Activated B cell treated with CpG ODN at 0.5 μM for 24 hours (primary cell): ENCODE measurements at regions of chr12 and their contacts with region 1.

Region 1: GRCh38 chr12:89019408-89020120 is 332.7 kb downstream of the DUSP6 start:
- DNase-seq: peak; percentile 25
- ATAC-seq: peak; percentile 99
- H3K4me3 Mint-ChIP-seq: no peak overlapping the region
- H3K27ac Mint-ChIP-seq: no peak overlapping the region
- H3K4me1 Mint-ChIP-seq: peaks cover 4% of the 10 kb centered on the region
- H3K27me3 Mint-ChIP-seq: peaks cover 4% of the 10 kb centered on the region
- CTCF ChIP-seq: peak; percentile 41

Region 2: DNA sequence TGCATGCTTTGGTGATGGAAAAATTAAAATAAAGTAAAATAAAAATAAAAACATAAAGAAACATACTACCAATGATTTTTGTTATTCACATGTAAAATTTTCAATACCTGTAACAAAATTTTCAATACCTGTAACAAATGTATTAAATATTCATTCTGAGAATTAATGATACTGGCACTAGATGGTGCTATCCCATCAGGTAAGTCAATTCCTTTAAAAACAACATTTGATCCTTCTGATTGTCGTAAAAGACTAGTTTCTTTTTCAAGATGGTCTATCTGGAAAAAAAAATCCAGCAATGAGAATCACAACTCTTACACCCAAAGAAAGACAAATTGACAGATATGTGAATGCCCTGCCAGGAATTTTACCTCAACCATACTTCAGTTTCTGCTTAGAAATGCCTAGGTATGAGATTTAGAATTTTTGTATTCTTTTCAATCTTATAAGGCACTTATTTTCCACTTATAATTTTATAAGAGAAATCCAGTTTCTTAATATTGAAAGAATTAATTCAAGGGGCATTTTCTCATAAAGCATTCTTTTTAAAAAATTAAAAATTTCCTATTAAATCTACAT is 908.4 kb before region 1 on chr12:
- CTCF ChIA-PET with region 1: no interaction called
- POLR2A ChIA-PET with region 1: no interaction called
- intact Hi-C with region 1: loop called (anchors 5 kb)
- DNase-seq: no peak
- ATAC-seq: no peak
- H3K4me3 Mint-ChIP-seq: no peak overlapping the region
- H3K27ac Mint-ChIP-seq: no peak overlapping the region
- H3K4me1 Mint-ChIP-seq: no peaks in the 10 kb centered on the region
- H3K27me3 Mint-ChIP-seq: no peaks in the 10 kb centered on the region
- CTCF ChIP-seq: no peak

Region 3: DNA sequence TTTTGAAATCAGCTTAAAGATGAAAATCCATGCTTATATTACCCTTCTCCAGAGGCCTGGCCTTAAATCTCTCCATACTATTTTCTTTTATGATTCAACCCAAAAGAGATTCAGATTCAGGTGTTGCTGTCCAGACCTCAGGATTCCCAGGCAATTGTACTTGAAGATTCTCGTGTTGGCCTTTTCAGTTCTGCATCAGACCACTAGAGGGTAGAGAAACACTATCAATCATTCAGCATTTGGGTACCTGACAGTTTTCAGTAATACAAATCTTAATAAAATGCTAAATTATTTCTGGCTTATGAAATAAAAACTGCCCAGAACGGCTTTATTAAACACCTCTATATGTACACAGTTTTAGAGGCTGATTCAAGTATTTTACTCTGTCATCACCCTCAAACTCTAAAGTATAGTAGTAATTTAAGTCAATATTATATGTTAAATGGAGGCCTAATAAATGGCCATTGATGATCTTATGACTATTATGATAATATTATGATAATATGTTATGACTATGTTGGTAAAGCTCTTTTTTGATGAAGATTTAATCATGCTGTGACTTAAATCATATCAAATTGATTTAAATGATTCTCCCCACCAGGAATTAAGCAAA is 31.6 kb after region 1 on chr12:
- CTCF ChIA-PET with region 1: interaction called, 3 read pairs
- POLR2A ChIA-PET with region 1: no interaction called
- intact Hi-C with region 1: loop called (anchors 1 kb)
- DNase-seq: no peak
- ATAC-seq: peak; percentile 67
- H3K4me3 Mint-ChIP-seq: no peak overlapping the region
- H3K27ac Mint-ChIP-seq: no peak overlapping the region
- H3K4me1 Mint-ChIP-seq: no peaks in the 10 kb centered on the region
- H3K27me3 Mint-ChIP-seq: no peaks in the 10 kb centered on the region
- CTCF ChIP-seq: no peak

Region 4: DNA sequence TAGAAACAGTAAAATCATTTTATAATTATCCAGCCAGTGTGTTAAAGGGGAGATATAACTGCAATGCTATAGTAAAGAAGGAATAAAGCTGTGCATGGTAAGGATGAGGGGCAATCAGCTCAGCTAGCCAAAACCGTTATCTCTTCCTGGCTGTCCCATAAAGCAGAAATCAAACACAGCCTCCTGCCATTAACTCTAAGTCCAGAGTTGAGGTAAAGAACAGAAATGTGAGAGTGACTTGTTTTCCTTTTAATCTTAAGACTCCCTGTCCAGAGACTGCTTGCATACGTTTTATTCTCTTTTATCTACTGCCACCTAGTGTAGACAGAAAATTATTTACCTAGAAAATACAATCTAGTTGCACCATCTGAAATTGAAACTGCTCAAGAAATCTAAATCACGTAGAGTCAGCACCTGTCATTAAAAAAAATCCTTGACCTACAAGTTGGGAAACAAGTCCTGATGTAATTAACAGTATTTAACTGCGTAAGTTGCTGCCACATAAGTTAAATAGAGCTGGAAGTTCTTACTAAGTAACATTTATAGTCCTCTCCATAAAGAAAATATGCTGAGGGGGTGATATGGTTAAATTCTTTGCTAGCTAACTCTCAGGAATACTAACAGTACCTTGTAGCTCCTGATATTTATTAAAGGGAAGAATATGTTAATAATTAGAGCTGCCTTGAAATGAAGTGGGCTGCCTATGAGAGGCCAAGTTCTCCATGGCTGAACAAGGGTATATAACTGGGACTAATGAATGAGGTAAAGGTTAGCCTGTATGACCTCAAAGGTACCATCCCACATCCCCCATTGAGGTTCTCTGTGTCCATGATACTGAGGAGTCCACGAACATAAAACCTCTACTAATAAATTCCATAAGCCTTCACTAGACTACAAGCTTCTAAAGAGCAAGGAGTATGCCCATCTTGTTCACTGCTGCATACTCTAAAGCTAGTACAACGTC is 442.4 kb after region 1 on chr12:
- CTCF ChIA-PET with region 1: interaction called, 80 read pairs
- POLR2A ChIA-PET with region 1: no interaction called
- intact Hi-C with region 1: loop called (anchors 1 kb)
- DNase-seq: no peak
- ATAC-seq: peak; percentile 77
- H3K4me3 Mint-ChIP-seq: peak overlapping the region; percentile 41
- H3K27ac Mint-ChIP-seq: no peak overlapping the region
- H3K4me1 Mint-ChIP-seq: peaks cover 16% of the 10 kb centered on the region
- H3K27me3 Mint-ChIP-seq: no peaks in the 10 kb centered on the region
- CTCF ChIP-seq: peak; percentile 28

Region 5: DNA sequence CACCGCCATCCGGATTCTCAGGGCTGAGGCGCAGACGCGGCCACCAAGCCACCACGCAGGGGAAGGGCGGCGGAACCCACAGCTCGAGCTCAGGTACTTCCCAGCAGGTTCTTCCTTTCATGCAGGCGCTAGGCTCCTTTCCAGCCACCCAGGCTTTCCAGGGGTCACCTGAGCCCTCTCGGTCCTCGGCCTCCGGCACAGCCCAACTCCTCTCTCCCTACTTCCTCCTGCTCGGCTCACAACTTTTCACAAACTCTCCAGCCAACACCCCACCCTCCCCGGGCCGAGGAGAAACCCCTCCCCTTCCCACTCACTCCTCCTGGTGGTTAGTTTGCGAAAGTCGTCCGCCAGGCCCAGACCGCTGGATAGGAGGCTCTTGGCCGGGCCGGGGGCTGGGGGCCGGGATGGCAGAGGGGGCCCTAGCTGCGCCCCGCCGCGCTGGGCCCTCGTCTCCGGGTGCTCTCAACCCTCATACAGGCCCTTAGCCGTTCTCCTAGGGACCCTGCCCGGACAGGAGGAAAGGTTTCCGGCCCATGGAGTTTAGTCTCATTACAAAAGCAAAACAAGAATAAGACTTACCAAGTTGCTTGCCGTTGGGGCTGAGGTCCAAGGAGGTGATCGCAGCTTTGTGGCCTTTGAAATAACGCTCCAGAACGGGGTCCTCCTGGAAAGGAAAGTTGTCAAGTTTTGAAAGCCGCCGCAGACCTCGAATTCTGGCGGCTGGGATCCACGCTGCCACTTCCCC is 505.1 kb after region 1 on chr12 and contains the start of gene GALNT4:
- CTCF ChIA-PET with region 1: interaction called, 20 read pairs
- POLR2A ChIA-PET with region 1: interaction called, 3 read pairs
- intact Hi-C with region 1: loop called (anchors 1 kb)
- DNase-seq: peak; percentile 75
- ATAC-seq: peak; percentile 78
- H3K4me3 Mint-ChIP-seq: peak within 1 kb of the TSS; percentile 99
- H3K27ac Mint-ChIP-seq: peak within 1 kb of the TSS; percentile 95
- H3K4me1 Mint-ChIP-seq: peaks cover 60% of the 10 kb centered on the region
- H3K27me3 Mint-ChIP-seq: no peaks in the 10 kb centered on the region
- CTCF ChIP-seq: no peak
- total RNA-seq, gene GALNT4: 6.2 and 6.3 TPM in 2 replicates

Region 6: DNA sequence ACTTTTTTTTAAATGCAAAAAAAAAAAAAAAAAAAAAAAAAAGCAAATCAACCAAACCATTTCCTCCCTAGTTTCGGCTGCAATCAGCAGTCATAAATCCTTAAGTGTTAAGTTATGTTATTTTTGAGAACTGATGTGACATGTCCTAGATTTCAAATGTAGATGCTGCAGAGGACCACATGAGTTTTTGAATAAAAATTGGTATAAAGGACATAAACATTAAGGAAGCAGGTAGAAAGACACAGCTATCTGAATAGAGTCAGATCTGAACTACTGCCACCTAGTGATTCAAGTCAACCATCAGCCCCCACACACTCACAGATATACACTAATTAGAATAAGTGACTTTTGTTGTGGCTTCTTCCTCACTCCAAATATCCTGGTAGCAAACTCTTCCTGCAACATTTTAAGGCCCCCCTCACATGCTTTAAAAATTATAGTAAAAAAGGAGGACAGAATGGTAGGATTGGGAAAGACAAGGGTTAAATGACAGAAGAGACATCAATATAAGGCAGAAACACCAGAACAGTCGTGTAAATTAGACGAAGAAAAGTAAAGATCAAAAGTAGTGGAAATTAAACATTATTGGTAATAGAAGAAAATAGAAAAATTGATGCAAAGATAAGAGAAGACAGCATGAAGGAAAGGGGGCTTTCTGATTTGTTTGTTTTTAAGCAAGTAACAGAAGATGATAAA is 1083.5 kb after region 1 on chr12:
- CTCF ChIA-PET with region 1: no interaction called
- POLR2A ChIA-PET with region 1: no interaction called
- intact Hi-C with region 1: loop called (anchors 5 kb)
- DNase-seq: no peak
- ATAC-seq: peak; percentile 75
- H3K4me3 Mint-ChIP-seq: peak overlapping the region; percentile 66
- H3K27ac Mint-ChIP-seq: peak overlapping the region; percentile 43
- H3K4me1 Mint-ChIP-seq: peaks cover 29% of the 10 kb centered on the region
- H3K27me3 Mint-ChIP-seq: no peaks in the 10 kb centered on the region
- CTCF ChIP-seq: no peak

Region 7: DNA sequence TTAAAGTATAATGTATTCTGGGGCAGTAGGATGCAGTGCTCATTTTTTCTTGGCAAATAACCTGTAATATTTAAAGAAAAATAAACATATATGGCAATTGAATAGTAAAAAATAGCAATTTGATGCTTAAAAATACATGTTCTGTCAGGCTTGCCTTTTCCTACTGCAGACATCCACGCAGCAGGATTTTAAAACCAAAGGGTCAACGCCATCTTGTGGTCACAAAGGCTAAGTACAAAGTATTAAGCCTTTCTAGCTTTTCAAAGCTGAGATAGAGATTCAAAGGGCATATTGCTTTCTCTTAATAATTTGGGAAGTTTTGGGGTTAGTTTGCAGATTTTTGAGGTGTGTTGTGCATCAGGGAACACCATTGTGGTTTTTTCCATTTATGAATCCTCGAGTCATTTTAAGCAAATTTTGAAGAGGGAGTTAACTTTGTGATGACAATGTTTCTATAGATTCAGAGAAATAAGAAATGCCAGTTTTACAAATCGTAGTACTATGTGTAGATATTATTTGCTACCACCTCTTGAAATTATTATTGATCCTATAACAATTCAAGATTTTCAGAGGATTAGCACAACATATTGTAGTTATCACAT is 1940.1 kb after region 1 on chr12:
- CTCF ChIA-PET with region 1: no interaction called
- POLR2A ChIA-PET with region 1: no interaction called
- intact Hi-C with region 1: loop called (anchors 5 kb)
- DNase-seq: no peak
- ATAC-seq: peak; percentile 60
- H3K4me3 Mint-ChIP-seq: no peak overlapping the region
- H3K27ac Mint-ChIP-seq: no peak overlapping the region
- H3K4me1 Mint-ChIP-seq: no peaks in the 10 kb centered on the region
- H3K27me3 Mint-ChIP-seq: no peaks in the 10 kb centered on the region
- CTCF ChIP-seq: no peak